ENCODE measurements at regions of chr22 and their contacts with region 1.

Region 1: GRCh38 chr22:33302049-33302545 is 243.9 kb upstream of the SYN3 start:
- DNase-seq: peak; percentile 77
- ATAC-seq: peak; percentile 59
- H3K4me3 Mint-ChIP-seq: peak overlapping the region; percentile 33
- H3K27ac Mint-ChIP-seq: peak overlapping the region; percentile 61
- H3K4me1 Mint-ChIP-seq: peaks cover 69% of the 10 kb centered on the region
- H3K27me3 Mint-ChIP-seq: no peaks in the 10 kb centered on the region
- CTCF ChIP-seq: peak; percentile 84

Region 2: GRCh38 chr22:33018232-33018864 is 283.7 kb before region 1 on chr22:
- CTCF ChIA-PET with region 1: interaction called, 10 read pairs
- POLR2A ChIA-PET with region 1: no interaction called
- intact Hi-C with region 1: no loop called
- DNase-seq: peak; percentile 48
- ATAC-seq: peak; percentile 75
- H3K4me3 Mint-ChIP-seq: no peak overlapping the region
- H3K27ac Mint-ChIP-seq: no peak overlapping the region
- H3K4me1 Mint-ChIP-seq: peaks cover 21% of the 10 kb centered on the region
- H3K27me3 Mint-ChIP-seq: no peaks in the 10 kb centered on the region
- CTCF ChIP-seq: peak; percentile 78

Region 3: GRCh38 chr22:33325235-33326004 is 23.3 kb after region 1 on chr22:
- CTCF ChIA-PET with region 1: interaction called, 5 read pairs
- POLR2A ChIA-PET with region 1: interaction called, 5 read pairs
- intact Hi-C with region 1: loop called (anchors 2 kb)
- DNase-seq: no peak
- ATAC-seq: peak; percentile 87
- H3K4me3 Mint-ChIP-seq: peak overlapping the region; percentile 63
- H3K27ac Mint-ChIP-seq: peak overlapping the region; percentile 86
- H3K4me1 Mint-ChIP-seq: peaks cover 64% of the 10 kb centered on the region
- H3K27me3 Mint-ChIP-seq: no peaks in the 10 kb centered on the region
- CTCF ChIP-seq: no peak

Region 4: DNA sequence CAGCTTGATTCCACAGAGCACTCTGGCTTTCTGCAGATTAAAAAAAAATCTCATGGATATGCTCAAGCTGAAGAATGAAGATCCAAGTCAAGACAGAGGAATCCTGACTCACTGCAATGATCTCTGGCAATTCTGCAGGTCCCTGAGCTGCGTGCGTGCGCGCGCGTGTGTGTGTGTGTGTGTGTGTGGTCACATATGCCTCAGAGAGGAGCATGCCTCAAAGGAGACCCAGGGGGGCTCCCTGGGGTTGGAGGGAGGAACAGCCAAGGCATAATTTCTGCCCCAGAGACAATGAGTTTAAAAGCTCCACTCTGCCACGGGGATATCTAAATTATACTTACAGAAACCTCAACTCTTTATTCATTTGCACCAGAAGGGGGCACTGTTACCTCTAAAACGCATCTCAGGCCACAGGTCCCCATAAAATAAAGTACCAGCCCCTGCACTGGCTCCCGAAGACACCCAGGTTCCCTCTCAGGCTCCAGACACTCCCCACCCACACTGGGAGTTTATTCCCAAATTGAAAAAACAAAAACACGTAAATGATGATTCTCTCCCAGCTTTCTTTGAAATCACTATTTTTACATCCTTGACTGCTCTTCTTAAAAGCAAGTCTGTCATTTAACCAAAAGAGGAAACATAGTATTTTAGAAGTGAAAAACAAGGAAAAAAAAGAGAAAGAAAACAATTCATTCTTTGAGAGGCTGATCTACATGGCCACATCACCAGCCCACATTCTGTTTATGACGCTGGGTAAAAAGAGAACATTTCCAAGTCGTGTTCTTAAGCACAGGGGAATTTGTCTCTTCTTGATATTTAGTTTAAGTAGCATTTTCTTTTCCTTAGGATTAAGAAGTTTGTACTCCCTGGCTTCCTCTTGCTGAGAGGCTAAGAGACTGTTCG is 217.2 kb after region 1 on chr22:
- CTCF ChIA-PET with region 1: interaction called, 39 read pairs
- POLR2A ChIA-PET with region 1: interaction called, 3 read pairs
- intact Hi-C with region 1: loop called (anchors 1 kb)
- DNase-seq: peak; percentile 22
- ATAC-seq: peak; percentile 51
- H3K4me3 Mint-ChIP-seq: peak overlapping the region; percentile 55
- H3K27ac Mint-ChIP-seq: peak overlapping the region; percentile 78
- H3K4me1 Mint-ChIP-seq: peaks cover 55% of the 10 kb centered on the region
- H3K27me3 Mint-ChIP-seq: no peaks in the 10 kb centered on the region
- CTCF ChIP-seq: no peak

Region 5: GRCh38 chr22:33579448-33580093 is 277.5 kb after region 1 on chr22:
- CTCF ChIA-PET with region 1: interaction called, 37 read pairs
- POLR2A ChIA-PET with region 1: interaction called, 3 read pairs
- intact Hi-C with region 1: loop called (anchors 1 kb)
- DNase-seq: peak; percentile 30
- ATAC-seq: peak; percentile 80
- H3K4me3 Mint-ChIP-seq: peak overlapping the region; percentile 42
- H3K27ac Mint-ChIP-seq: no peak overlapping the region
- H3K4me1 Mint-ChIP-seq: peaks cover 55% of the 10 kb centered on the region
- H3K27me3 Mint-ChIP-seq: no peaks in the 10 kb centered on the region
- CTCF ChIP-seq: peak; percentile 73

Region 6: DNA sequence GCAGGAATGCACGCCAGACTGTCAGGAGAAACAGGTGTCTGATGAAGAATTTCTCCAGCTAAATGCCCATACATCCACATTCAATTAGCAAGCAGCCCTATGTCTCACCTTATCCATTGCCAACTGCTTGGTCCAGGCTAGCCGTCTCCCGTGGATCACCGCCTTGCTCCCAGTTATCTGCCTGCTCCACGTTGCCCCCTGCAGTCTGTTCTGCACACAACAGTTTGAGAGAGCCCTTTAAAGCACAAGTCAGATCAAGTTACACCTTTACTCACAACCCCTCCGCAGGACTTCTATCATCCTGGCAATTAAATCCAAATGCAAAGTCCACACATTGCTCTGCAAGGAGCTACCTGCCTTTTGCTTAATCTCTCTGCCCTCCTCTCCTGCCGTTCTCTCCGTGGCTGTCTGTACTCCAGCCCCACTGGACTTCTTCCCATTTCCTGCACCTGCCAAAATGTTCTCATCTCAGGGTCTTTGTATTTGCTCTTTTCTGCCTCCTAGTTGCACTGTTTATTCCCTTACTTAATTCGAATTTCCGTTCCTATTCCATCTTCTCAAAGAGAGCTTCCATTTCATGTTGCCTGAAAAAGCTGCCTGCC is 803.5 kb after region 1 on chr22:
- CTCF ChIA-PET with region 1: interaction called, 50 read pairs
- POLR2A ChIA-PET with region 1: no interaction called
- intact Hi-C with region 1: no loop called
- DNase-seq: peak; percentile 15
- ATAC-seq: peak; percentile 45
- H3K4me3 Mint-ChIP-seq: no peak overlapping the region
- H3K27ac Mint-ChIP-seq: no peak overlapping the region
- H3K4me1 Mint-ChIP-seq: no peaks in the 10 kb centered on the region
- H3K27me3 Mint-ChIP-seq: peaks cover 12% of the 10 kb centered on the region
- CTCF ChIP-seq: no peak

Region 7: GRCh38 chr22:35150183-35151107 is 1848.3 kb after region 1 on chr22:
- CTCF ChIA-PET with region 1: interaction called, 12 read pairs
- POLR2A ChIA-PET with region 1: no interaction called
- intact Hi-C with region 1: no loop called
- DNase-seq: peak; percentile 44
- ATAC-seq: peak; percentile 61
- H3K4me3 Mint-ChIP-seq: no peak overlapping the region
- H3K27ac Mint-ChIP-seq: no peak overlapping the region
- H3K4me1 Mint-ChIP-seq: peaks cover 3% of the 10 kb centered on the region
- H3K27me3 Mint-ChIP-seq: peaks cover 29% of the 10 kb centered on the region
- CTCF ChIP-seq: no peak